ENCODE measurements at regions of chr11 and their contacts with region 1.

Region 1: GRCh38 chr11:118610804-118611795 is 3.7 kb downstream of the PHLDB1 start:
- DNase-seq: peak; percentile 91

Region 2: GRCh38 chr11:118572061-118572980 is 38.8 kb before region 1 on chr11 and contains the start of gene ARCN1:
- intact Hi-C with region 1: loop called (anchors 5 kb)
- DNase-seq: peak; percentile 93
- total RNA-seq, gene ARCN1: 118 TPM

Region 3: DNA sequence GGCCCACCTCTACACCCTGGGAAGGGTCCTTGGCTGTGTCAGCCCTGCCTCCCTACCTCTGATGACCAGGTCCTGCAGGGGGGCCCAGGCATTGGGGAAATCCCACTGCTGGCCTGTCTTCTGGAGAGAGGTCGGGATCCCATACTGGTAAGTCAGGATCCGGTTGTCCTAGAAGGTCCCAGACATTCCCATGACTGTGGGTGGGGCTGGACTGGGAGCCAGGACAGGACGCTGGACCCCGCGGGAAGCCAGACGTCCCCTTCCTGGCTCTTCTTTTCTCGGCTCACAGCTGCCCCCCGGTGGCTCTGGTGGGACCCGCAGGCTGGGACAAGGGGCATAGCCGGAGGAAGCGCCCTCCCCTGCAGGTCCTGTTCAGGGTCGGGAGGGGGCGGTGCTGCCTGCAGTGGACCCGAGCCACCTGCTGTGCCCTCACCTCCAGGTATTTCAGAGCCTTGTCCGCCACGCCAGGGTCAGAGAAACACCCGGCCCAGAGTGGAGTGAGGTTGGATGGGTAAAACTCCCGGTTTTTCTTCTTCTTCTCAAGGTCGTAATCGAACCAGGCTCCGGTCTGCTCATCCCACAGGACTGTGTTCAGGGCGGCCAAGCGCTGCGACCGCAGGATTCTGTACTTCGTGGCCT is 48.3 kb after region 1 on chr11:
- intact Hi-C with region 1: loop called (anchors 5 kb)
- DNase-seq: peak; percentile 92

Region 4: DNA sequence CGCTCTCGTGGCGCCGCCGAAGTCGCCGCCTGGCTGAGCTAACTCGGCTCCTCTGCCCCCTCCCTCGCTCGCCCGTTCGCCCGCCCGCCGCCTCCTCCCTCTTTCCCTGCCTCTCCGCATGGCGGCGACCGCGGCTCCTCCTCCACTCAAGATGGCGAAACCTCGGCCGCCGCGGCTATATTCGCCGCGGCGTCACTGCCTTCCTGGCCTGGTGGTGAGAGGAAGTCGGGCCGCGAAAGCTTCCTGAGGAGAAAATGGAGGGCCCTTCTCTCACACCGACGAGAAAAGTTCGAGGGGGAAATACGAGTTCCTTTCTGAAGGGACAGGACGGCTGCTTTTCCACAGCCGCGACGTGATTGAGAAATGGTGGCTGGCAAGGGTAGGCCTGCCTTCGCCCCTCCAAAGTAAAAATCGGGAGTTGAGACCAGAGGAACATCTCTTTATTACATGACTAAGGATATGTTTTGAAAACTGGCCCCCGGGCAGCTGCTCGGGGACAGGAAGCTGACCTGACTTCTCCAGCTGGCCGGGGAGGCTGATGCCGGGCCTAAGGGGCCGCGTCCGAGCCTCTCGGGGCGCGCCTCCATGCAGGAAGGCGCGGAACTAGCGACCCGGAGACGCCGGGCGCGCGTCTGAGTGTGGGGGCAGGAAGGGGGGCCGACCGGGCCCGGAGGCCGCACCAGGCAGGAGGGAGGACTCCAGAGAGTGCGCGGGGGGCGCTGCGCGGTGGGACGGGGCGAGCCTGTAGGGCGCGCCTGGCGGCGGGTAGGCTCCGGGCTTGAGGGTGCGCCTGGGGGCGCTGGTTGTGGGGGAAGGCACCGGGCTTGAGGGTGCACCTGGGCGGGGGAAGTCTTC is 180.2 kb after region 1 on chr11 and contains the start of gene DDX6:
- intact Hi-C with region 1: loop called (anchors 5 kb)
- DNase-seq: peak; percentile 95
- total RNA-seq, gene DDX6: 118 TPM